SK-N-SH (cell line): ENCODE measurements at regions of chr16 and their contacts with region 1.

Region 1: DNA sequence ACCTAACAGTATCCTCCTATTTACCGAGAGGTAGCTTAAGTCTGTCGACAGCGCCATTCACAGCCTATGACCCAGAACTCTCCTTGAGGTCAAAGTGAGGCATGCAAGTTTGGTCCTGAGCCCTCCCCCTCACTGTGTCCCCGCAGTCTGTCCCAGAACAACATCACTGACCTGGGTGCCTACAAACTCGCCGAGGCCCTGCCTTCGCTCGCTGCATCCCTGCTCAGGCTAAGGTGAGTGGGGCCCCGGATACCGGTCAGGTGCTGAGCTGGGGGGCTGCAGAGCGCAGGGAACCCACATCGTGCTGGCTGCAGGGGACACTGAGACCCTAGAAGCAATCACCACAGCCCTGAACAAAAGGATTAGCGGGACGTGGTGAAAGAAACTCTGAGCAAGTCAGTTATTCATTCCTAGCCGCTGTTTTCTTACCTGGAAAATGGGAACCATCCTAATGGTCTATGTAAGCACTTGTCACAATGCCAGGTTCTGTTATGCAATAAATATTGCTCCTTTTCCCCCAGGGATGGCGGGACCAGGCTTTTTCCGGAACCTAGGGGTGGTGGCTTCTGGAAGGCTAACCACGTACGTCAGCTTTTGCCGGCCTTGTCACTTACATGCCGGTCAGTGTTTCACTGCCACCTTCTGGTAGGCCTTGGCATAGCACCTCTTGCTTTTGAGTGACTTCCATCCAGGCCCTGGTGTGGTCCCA is 23.8 kb downstream of the DEXI start:
- DNase-seq: peak; percentile 88
- H3K4me3 ChIP-seq: peak overlapping the region in 1 of 2 experiments; percentile 51; a peak in 1 of 4 replicates
- H3K27ac ChIP-seq: no peak overlapping the region
- H3K4me1 ChIP-seq: peaks cover 0 to 13% of the 10 kb centered on the region in 2 experiments; a peak in 1 of 4 replicates
- H3K27me3 ChIP-seq: no peaks in the 10 kb centered on the region
- CTCF ChIP-seq: peak; percentile 94
- EP300 ChIP-seq: no peak
- RAD21 ChIP-seq: peak; percentile 95

Region 2: DNA sequence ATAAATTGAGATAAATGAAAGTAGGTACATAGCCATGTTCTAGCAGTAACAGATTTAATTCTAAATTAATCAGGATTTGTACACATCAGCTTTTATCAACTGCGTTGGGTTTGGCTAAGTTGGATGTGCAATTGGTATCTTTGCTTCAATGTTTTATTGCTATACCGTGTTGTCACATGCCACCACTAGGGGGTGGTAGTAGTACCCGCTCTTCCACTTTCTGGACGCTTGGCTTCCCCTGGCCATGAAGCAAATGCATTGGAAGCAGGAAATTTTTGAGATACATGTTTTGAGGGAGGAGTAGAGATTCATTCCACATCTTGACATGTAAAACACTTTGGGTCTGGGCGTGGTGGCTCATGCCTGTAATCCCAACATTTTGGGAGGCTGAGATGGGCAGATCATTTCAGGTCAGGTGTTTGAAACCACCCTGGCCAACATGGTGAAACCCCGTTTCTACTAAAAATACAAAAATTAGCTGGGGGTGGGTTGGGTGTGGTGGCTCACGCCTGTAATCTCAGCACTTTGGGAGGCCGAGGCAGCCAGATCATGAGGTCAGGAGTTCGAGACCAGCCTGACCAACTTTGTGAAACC is 396.7 kb before region 1 on chr16:
- CTCF ChIA-PET with region 1: interaction called, 12 read pairs
- POLR2A ChIA-PET with region 1: no interaction called
- DNase-seq: peak; percentile 75
- H3K4me3 ChIP-seq: no peak overlapping the region; a peak in 1 of 4 replicates
- H3K27ac ChIP-seq: no peak overlapping the region
- H3K4me1 ChIP-seq: no peaks in the 10 kb centered on the region
- H3K27me3 ChIP-seq: no peaks in the 10 kb centered on the region
- CTCF ChIP-seq: peak; percentile 87
- EP300 ChIP-seq: no peak
- RAD21 ChIP-seq: peak; percentile 88

Region 3: DNA sequence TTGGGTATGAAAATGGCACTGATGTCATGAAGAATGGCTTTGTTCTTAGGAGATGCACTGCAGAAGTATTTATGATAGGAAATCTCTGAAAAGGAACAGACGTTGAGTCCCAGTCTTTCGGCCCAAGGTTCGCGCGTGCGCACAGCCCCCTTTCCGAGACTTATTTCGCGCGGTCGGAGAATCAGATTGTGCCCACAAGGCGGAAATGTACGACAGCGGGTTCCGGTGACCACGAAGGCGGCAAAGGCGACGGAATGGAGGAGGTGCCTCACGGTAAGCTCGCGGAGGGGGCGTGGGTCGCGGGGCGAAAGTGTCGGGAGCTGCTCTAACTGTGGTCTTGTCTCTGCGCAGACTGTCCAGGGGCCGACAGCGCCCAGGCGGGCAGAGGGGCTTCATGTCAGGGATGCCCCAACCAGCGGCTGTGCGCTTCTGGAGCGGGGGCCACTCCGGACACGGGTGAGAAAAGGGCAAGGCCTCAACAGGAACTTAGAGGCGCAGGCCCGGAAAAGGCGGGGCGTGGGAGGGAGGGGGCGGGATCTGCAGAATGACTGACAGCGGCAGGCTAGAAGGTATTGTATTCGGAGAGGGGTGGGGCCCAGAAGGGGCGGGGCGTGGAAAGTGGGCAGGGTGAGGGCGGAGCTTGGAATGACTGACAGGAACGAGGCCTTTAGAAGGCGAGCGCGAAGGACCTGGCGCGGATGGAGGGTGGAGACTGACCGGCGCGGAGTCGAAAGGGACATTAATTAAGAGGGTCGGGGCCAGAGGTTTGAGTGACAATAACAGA is 174.6 kb before region 1 on chr16 and contains the start of gene NUBP1:
- CTCF ChIA-PET with region 1: interaction called, 38 read pairs
- POLR2A ChIA-PET with region 1: interaction called, 8 read pairs
- DNase-seq: peak; percentile 92
- H3K4me3 ChIP-seq: peak within 1 kb of the TSS; percentile 60 to 66
- H3K27ac ChIP-seq: peak within 1 kb of the TSS; percentile 96 to 97
- H3K4me1 ChIP-seq: peaks cover 5 to 34% of the 10 kb centered on the region in 2 experiments; a peak in 3 of 4 replicates
- H3K27me3 ChIP-seq: no peaks in the 10 kb centered on the region
- CTCF ChIP-seq: no peak
- EP300 ChIP-seq: no peak
- RAD21 ChIP-seq: no peak
- polyA plus RNA-seq, gene NUBP1: 40.7 and 49.8 TPM in 2 replicates

Region 4: DNA sequence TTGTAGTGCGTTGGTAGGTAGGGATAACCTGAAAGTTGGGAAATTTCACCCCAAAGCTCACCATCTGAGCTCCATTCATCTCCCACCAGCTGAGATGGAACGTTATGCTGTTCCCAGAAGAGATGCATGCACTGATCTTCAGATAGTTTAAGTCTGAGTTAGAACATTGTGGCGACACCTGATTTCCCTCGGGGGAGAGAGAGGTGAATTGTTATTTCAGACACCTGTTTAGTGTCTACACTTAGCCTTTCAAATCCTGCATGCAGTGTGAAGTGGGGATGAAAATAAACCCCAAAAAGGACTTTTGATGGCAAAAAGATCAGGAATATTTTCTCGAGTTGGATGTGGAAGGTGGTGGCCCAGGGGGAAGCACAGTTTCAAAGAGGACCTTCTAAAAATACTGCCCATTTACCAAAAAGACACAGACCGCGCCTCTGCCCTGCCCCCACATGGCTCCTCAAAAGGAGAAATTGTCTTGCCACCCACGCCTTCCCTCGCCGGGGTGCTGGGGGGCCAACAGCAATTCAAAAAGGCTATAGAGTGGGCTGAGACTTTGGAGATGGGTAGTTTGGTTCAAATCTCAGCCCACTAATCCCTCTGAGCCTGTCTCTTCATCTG is 30.0 kb before region 1 on chr16:
- CTCF ChIA-PET with region 1: interaction called, 23 read pairs
- POLR2A ChIA-PET with region 1: no interaction called
- DNase-seq: no peak
- H3K4me3 ChIP-seq: no peak overlapping the region
- H3K27ac ChIP-seq: no peak overlapping the region
- H3K4me1 ChIP-seq: no peaks in the 10 kb centered on the region
- H3K27me3 ChIP-seq: no peaks in the 10 kb centered on the region; the same call in 1 of the 2 replicates
- CTCF ChIP-seq: no peak
- EP300 ChIP-seq: no peak
- RAD21 ChIP-seq: no peak

Region 5: GRCh38 chr16:10937068-10937859 is 18.8 kb after region 1 on chr16:
- CTCF ChIA-PET with region 1: interaction called, 16 read pairs
- POLR2A ChIA-PET with region 1: no interaction called
- DNase-seq: no peak
- H3K4me3 ChIP-seq: no peak overlapping the region
- H3K27ac ChIP-seq: no peak overlapping the region; a peak in 1 of 4 replicates
- H3K4me1 ChIP-seq: peaks cover 15 to 70% of the 10 kb centered on the region in 2 experiments
- H3K27me3 ChIP-seq: no peaks in the 10 kb centered on the region
- CTCF ChIP-seq: no peak
- EP300 ChIP-seq: no peak
- RAD21 ChIP-seq: no peak

Region 6: DNA sequence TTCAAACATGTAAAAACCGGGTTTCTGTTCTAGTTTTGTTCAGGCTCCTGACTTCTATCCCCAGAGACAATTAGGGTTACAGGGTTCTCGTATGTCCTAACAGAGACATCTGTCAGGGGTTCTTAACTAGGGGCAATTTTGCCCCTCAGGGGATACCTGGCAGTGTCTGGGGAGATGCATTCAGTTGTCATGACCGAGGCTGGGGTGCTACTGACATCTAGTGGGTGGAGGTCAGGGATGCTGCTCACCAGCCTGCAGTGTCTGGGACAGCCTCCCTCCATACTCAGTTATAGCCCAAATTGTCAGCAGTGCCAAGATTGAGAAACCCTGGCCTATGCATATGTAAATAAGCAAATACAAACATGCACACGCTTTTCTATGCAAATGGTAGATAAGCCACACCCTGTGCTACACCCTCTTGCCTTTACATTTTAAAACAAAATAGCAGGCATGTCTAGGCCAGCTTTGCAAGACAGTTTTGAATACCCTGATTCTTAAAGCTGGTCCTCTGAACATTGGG is 63.3 kb after region 1 on chr16:
- CTCF ChIA-PET with region 1: no interaction called
- POLR2A ChIA-PET with region 1: no interaction called
- DNase-seq: peak; percentile 53
- H3K4me3 ChIP-seq: no peak overlapping the region
- H3K27ac ChIP-seq: no peak overlapping the region
- H3K4me1 ChIP-seq: peaks cover 0 to 6% of the 10 kb centered on the region in 2 experiments; a peak in 2 of 4 replicates
- H3K27me3 ChIP-seq: no peaks in the 10 kb centered on the region
- CTCF ChIP-seq: peak; percentile 60
- EP300 ChIP-seq: no peak
- RAD21 ChIP-seq: peak; percentile 47